ENCODE measurements at regions of chr10 and their contacts with region 1.

Region 1: GRCh38 chr10:115141254-115141653 is 48.1 kb downstream of the ATRNL1 start:
- DNase-seq: peak in 1 of 2 experiments; percentile 6
- H3K4me3 ChIP-seq: no peak overlapping the region
- H3K4me3 Mint-ChIP-seq: no peak overlapping the region
- H3K27ac Mint-ChIP-seq: no peak overlapping the region
- H3K4me1 ChIP-seq: no peaks in the 10 kb centered on the region
- H3K4me1 Mint-ChIP-seq: no peaks in the 10 kb centered on the region
- H3K27me3 ChIP-seq: no peaks in the 10 kb centered on the region
- H3K27me3 Mint-ChIP-seq: peaks cover 7% of the 10 kb centered on the region
- CTCF ChIP-seq: peak; percentile 32 to 52

Region 2: DNA sequence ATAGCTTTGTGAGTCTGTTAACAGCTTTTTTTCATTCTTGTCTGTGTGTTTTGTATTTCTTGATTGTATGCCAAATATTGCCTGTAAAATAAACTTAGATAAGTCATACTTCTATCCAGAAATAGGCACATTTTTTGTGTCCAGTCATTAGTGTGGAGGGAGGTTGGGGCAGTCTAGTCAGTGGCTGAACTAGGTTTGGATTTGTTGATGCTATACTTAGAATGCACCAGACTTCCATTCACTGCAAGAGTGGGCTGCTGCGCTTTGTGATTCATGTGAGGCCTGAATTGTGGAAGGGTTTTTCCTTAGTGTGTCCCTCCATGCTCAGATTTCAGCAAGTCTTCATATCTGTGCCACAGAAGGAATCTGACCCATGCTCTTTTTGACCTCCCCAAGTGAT is 153.3 kb before region 1 on chr10:
- CTCF ChIA-PET with region 1: no interaction called
- POLR2A ChIA-PET with region 1: no interaction called
- intact Hi-C with region 1: no loop called
- DNase-seq: no peak
- H3K4me3 ChIP-seq: no peak overlapping the region
- H3K4me3 Mint-ChIP-seq: no peak overlapping the region
- H3K27ac Mint-ChIP-seq: no peak overlapping the region
- H3K4me1 ChIP-seq: no peaks in the 10 kb centered on the region
- H3K4me1 Mint-ChIP-seq: no peaks in the 10 kb centered on the region
- H3K27me3 ChIP-seq: no peaks in the 10 kb centered on the region
- H3K27me3 Mint-ChIP-seq: no peaks in the 10 kb centered on the region
- CTCF ChIP-seq: no peak

Region 3: GRCh38 chr10:115171392-115171960 is 30.2 kb after region 1 on chr10:
- CTCF ChIA-PET with region 1: no interaction called
- POLR2A ChIA-PET with region 1: no interaction called
- intact Hi-C with region 1: no loop called
- DNase-seq: no peak
- H3K4me3 ChIP-seq: no peak overlapping the region
- H3K4me3 Mint-ChIP-seq: no peak overlapping the region
- H3K27ac Mint-ChIP-seq: no peak overlapping the region
- H3K4me1 ChIP-seq: no peaks in the 10 kb centered on the region
- H3K4me1 Mint-ChIP-seq: no peaks in the 10 kb centered on the region
- H3K27me3 ChIP-seq: no peaks in the 10 kb centered on the region
- H3K27me3 Mint-ChIP-seq: peaks cover 3% of the 10 kb centered on the region
- CTCF ChIP-seq: peak; percentile 36 to 41

Region 4: DNA sequence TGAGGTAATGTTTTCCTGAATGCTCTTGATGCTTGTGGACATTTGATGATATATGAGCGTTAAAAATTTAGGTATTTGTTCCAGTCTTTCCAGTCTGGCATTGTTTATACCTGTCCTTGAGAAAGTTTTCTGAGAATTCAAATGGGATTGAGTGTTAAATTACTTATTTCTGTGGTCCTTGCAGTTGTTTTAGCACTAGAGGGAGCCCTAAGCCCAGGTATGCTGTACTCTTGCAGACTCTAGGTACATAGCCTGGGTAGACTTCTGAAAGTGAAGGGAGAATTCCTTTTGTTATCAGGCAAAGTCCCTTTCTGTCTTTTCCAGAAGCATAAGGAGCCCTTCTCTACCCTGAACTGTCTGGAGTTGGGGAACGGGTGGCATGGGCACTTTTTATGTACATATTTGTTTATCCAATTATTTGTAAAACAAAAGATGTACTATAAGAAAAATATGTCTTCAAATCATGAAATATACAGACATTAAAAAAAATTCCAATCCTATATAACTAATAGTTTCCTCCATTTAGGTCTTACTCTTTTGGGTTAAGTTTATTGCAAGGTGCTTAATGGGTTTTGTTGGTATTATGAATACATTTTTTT is 214.0 kb after region 1 on chr10:
- CTCF ChIA-PET with region 1: no interaction called
- POLR2A ChIA-PET with region 1: no interaction called
- intact Hi-C with region 1: loop called (anchors 1 kb)
- DNase-seq: peak; percentile 68 to 74
- H3K4me3 ChIP-seq: no peak overlapping the region
- H3K4me3 Mint-ChIP-seq: no peak overlapping the region
- H3K27ac Mint-ChIP-seq: no peak overlapping the region
- H3K4me1 ChIP-seq: no peaks in the 10 kb centered on the region
- H3K4me1 Mint-ChIP-seq: no peaks in the 10 kb centered on the region
- H3K27me3 ChIP-seq: no peaks in the 10 kb centered on the region
- H3K27me3 Mint-ChIP-seq: peaks cover 4% of the 10 kb centered on the region
- CTCF ChIP-seq: peak; percentile 77 to 81

Region 5: DNA sequence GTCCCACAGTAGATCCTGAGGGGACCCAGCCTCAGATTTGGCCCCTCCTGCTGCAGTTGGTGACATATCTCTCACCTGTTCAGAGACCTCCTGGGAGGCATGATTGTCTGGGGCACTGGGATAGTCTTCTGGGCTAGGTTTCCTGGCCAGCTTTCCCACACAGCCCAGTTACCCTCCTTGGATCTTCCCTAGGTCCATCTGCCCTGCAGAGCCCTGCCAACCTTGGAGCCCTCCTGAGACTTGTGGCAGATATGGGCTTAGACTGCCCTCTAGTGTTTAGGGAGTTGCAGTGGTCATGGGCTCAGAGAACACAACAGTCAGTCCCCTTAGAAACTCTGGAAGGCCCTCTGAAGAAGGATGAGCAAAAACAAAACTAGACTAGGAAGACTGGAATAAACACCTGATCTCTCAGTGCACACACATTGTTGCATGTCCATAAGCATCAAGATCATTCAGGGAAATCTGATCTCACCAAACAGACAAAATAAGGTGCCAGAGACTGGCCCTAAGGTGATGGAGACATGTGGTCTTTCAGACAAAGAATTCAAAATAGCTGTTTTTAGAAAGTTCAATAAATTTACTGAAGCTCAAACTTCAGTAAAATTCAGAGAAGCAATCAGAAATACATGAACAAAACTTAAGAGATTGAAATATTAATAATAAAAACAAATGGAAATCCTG is 276.5 kb after region 1 on chr10:
- CTCF ChIA-PET with region 1: no interaction called
- POLR2A ChIA-PET with region 1: no interaction called
- intact Hi-C with region 1: loop called (anchors 1 kb)
- DNase-seq: peak; percentile 64
- H3K4me3 ChIP-seq: no peak overlapping the region
- H3K4me3 Mint-ChIP-seq: no peak overlapping the region
- H3K27ac Mint-ChIP-seq: no peak overlapping the region
- H3K4me1 ChIP-seq: no peaks in the 10 kb centered on the region
- H3K4me1 Mint-ChIP-seq: no peaks in the 10 kb centered on the region
- H3K27me3 ChIP-seq: no peaks in the 10 kb centered on the region
- H3K27me3 Mint-ChIP-seq: peaks cover 7% of the 10 kb centered on the region
- CTCF ChIP-seq: peak; percentile 61 to 76

Region 6: DNA sequence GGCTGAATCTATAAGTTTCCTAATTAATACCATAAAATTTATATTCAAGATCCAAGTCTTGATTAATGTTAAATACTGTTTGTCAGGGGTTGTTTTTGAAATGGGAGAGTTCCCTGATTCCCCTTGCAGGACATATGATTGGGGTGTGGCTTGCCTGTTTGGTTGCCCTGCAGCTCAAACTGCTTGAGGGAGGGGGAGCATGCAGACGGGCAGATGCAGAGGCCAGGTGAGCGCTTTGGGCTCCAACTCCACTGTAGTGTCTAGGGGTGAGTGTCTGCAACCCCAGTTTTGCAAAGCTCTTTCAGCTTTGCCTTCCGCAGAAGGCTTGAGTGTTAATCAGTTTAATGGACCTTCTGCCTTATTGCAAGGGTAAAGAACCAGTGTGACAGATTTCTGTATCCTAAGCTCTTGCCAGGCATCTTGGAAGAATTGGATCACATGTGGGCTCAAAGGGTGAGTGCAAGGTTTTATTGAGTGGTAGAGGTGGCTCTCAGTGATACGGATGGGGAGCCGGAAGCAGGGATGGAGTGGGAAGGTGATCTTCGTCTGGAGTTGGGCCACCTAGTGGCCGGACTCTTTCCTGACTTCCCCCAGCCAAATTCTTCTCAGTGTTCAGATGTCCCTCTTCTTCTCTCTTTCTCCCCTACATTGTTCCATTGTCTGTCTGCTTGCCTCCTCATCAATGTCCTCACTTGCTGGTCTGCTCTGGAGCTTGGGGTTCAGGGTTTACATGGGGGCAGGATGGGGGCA is 431.6 kb after region 1 on chr10:
- CTCF ChIA-PET with region 1: no interaction called
- POLR2A ChIA-PET with region 1: no interaction called
- intact Hi-C with region 1: loop called (anchors 5 kb)
- DNase-seq: peak in 1 of 2 experiments; percentile 40
- H3K4me3 ChIP-seq: no peak overlapping the region
- H3K4me3 Mint-ChIP-seq: no peak overlapping the region
- H3K27ac Mint-ChIP-seq: no peak overlapping the region
- H3K4me1 ChIP-seq: no peaks in the 10 kb centered on the region
- H3K4me1 Mint-ChIP-seq: no peaks in the 10 kb centered on the region
- H3K27me3 ChIP-seq: no peaks in the 10 kb centered on the region
- H3K27me3 Mint-ChIP-seq: no peaks in the 10 kb centered on the region
- CTCF ChIP-seq: peak; percentile 50 to 63